ENCODE measurements at regions of chr2 and their contacts with region 1.

Region 1: GRCh38 chr2:149040451-149040850 is 2.0 kb downstream of the LYPD6B start:
- DNase-seq: peak; percentile 34 to 94
- H3K4me3 ChIP-seq: no peak overlapping the region
- H3K27ac ChIP-seq: no peak overlapping the region
- H3K4me1 ChIP-seq: peaks cover 0 to 5% (median 2%) of the 10 kb centered on the region in 4 experiments; a peak in 4 of 7 replicates
- H3K27me3 ChIP-seq: peaks cover 0 to 25% (median 16%) of the 10 kb centered on the region in 4 experiments; a peak in 6 of 7 replicates
- CTCF ChIP-seq: peak; percentile 77 to 95 (median 90)
- EP300 ChIP-seq: no peak
- POLR2A ChIP-seq: no peak
- RAD21 ChIP-seq: peak; percentile 80 to 82

Region 2: DNA sequence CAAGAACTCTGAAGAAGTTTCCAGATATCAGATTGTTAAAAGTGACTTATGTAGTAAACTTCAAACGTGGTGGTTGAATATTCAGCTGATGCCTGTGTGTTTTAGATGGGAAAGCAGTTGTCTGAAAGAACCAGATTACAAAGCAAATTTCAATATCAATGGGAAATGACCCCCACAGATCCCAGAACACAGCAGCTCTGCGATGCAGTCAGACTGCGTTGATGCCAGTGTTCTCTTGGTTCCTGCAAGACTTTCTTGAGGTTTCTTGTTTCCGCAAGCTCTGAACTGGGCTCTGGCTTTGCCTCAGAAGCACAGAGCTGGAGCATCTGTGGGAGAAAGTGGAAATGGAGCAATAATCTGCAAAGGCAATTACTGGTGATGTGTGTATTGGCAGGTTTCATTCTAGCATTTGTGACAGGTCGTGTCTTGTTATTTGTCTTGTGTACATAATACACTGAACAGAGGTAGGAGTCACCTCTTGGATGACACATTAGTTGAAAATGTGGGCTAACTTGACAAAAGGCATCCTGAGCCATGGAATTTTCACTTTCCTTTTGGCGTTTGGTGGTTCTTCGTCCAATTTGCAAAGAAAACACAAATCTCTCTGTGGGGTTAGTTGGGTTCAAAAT is 12.7 kb before region 1 on chr2:
- CTCF ChIA-PET with region 1: interaction called, 49 read pairs
- POLR2A ChIA-PET with region 1: interaction called, 4 read pairs
- DNase-seq: peak in 1 of 2 experiments; percentile 47
- H3K4me3 ChIP-seq: no peak overlapping the region; a peak in 1 of 8 replicates
- H3K27ac ChIP-seq: no peak overlapping the region
- H3K4me1 ChIP-seq: peaks cover 4 to 14% (median 6%) of the 10 kb centered on the region in 4 experiments; a peak in 6 of 7 replicates
- H3K27me3 ChIP-seq: no peaks in the 10 kb centered on the region; a peak in 1 of 7 replicates
- CTCF ChIP-seq: no peak
- EP300 ChIP-seq: no peak
- POLR2A ChIP-seq: no peak
- RAD21 ChIP-seq: no peak

Region 3: DNA sequence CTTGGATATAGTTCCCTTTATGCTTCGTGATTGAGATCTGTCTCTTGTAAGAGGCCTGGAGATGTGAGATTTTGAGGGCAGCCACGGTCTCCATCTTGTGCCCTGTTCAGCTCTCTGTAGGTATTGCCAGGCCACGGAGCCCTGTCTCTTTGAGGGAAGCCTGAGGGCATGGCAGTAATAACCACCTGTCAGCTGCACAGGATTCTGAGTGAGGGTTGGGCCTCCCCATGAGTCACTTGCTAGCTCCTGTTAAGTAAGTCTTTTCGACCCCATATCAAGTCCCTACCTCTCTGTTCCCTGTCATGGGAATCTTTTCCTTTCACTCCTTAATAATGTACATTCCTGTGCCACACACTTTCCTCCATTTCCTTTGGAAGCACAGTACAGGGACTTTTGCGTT is 18.5 kb after region 1 on chr2:
- CTCF ChIA-PET with region 1: interaction called, 13 read pairs
- POLR2A ChIA-PET with region 1: interaction called, 3 read pairs
- DNase-seq: no peak
- H3K4me3 ChIP-seq: no peak overlapping the region
- H3K27ac ChIP-seq: no peak overlapping the region
- H3K4me1 ChIP-seq: peaks cover 0 to 2% (median 0%) of the 10 kb centered on the region in 4 experiments; a peak in 1 of 7 replicates
- H3K27me3 ChIP-seq: no peaks in the 10 kb centered on the region
- CTCF ChIP-seq: no peak
- EP300 ChIP-seq: no peak
- POLR2A ChIP-seq: no peak
- RAD21 ChIP-seq: no peak

Region 4: DNA sequence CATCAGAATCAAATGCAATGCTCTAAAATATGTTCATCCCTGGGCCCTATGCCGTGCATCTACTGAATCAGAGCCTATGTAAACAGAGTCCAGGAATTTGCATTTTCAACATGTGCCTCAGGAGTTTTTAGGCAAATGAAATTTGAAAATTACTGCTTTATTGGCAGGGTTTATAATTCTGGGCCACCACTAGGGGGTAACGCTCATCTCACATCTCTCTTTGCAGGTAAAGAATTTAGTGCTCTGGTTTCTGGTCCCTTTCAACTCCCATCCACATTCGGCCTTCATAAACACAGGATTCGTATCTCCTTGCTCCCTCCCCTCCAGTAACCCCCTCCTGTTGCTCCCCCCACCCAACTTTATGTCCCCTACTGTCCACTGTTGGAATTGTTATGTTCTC is 47.3 kb after region 1 on chr2:
- CTCF ChIA-PET with region 1: interaction called, 18 read pairs
- POLR2A ChIA-PET with region 1: no interaction called
- DNase-seq: no peak
- H3K4me3 ChIP-seq: no peak overlapping the region
- H3K27ac ChIP-seq: no peak overlapping the region
- H3K4me1 ChIP-seq: peaks cover 0 to 4% (median 4%) of the 10 kb centered on the region in 4 experiments; a peak in 4 of 7 replicates
- H3K27me3 ChIP-seq: no peaks in the 10 kb centered on the region
- CTCF ChIP-seq: peak in 2 of 3 experiments; percentile 47 to 63; a peak in 3 of 4 replicates
- EP300 ChIP-seq: no peak
- POLR2A ChIP-seq: no peak
- RAD21 ChIP-seq: peak; percentile 48 to 68

Region 5: GRCh38 chr2:149313512-149313972 is 273.1 kb after region 1 on chr2:
- CTCF ChIA-PET with region 1: interaction called, 48 read pairs
- POLR2A ChIA-PET with region 1: no interaction called
- DNase-seq: peak in 1 of 2 experiments; percentile 64
- H3K4me3 ChIP-seq: no peak overlapping the region; a peak in 1 of 8 replicates
- H3K27ac ChIP-seq: no peak overlapping the region
- H3K4me1 ChIP-seq: peaks cover 0 to 11% (median 7%) of the 10 kb centered on the region in 4 experiments; a peak in 5 of 7 replicates
- H3K27me3 ChIP-seq: no peaks in the 10 kb centered on the region
- CTCF ChIP-seq: peak; percentile 64 to 96 (median 85)
- EP300 ChIP-seq: no peak
- POLR2A ChIP-seq: no peak
- RAD21 ChIP-seq: peak; percentile 83 to 91

Region 6: GRCh38 chr2:149360106-149360505 is 319.7 kb after region 1 on chr2:
- CTCF ChIA-PET with region 1: no interaction called
- POLR2A ChIA-PET with region 1: no interaction called
- DNase-seq: no peak
- H3K4me3 ChIP-seq: no peak overlapping the region
- H3K27ac ChIP-seq: no peak overlapping the region
- H3K4me1 ChIP-seq: peaks cover 0 to 4% (median 0%) of the 10 kb centered on the region in 4 experiments; a peak in 1 of 7 replicates
- H3K27me3 ChIP-seq: no peaks in the 10 kb centered on the region
- CTCF ChIP-seq: no peak
- EP300 ChIP-seq: no peak
- POLR2A ChIP-seq: no peak
- RAD21 ChIP-seq: no peak